Activated CD4-positive, alpha-beta memory T cell treated with anti-CD3 and anti-CD28 coated beads, Interleukin-2, amount 10 ng/mL, durations not matched to agents 7 days and 5 days (primary cell): ENCODE measurements at regions of chr4 and their contacts with region 1.

Region 1: GRCh38 chr4:112951362-112952312 is 97.8 kb upstream of the ANK2 start:
- DNase-seq: no peak
- H3K4me3 Mint-ChIP-seq: no peak overlapping the region
- H3K27ac Mint-ChIP-seq: no peak overlapping the region
- H3K4me1 Mint-ChIP-seq: no peaks in the 10 kb centered on the region
- H3K27me3 Mint-ChIP-seq: peaks cover 12% of the 10 kb centered on the region

Region 2: GRCh38 chr4:112889619-112890527 is 61.8 kb before region 1 on chr4:
- CTCF ChIA-PET with region 1: no interaction called
- POLR2A ChIA-PET with region 1: no interaction called
- DNase-seq: no peak
- H3K4me3 Mint-ChIP-seq: no peak overlapping the region
- H3K27ac Mint-ChIP-seq: no peak overlapping the region
- H3K4me1 Mint-ChIP-seq: no peaks in the 10 kb centered on the region
- H3K27me3 Mint-ChIP-seq: peaks cover 3% of the 10 kb centered on the region

Region 3: GRCh38 chr4:112938461-112939058 is 13.1 kb before region 1 on chr4:
- CTCF ChIA-PET with region 1: interaction called, 20 read pairs
- POLR2A ChIA-PET with region 1: no interaction called
- DNase-seq: no peak
- H3K4me3 Mint-ChIP-seq: no peak overlapping the region
- H3K27ac Mint-ChIP-seq: no peak overlapping the region
- H3K4me1 Mint-ChIP-seq: no peaks in the 10 kb centered on the region
- H3K27me3 Mint-ChIP-seq: peaks cover 7% of the 10 kb centered on the region